Panc1 (cell line): ENCODE measurements at regions of chr11 and their contacts with region 1.

Region 1: GRCh38 chr11:75867775-75868374 is 52.9 kb downstream of the UVRAG start:
- DNase-seq: peak; percentile 27
- ATAC-seq: peak; percentile 82
- H3K4me3 ChIP-seq: no peak overlapping the region
- H3K27ac ChIP-seq: no peak overlapping the region
- H3K4me1 ChIP-seq: peaks cover 7% of the 10 kb centered on the region
- H3K27me3 ChIP-seq: no peaks in the 10 kb centered on the region
- CTCF ChIP-seq: peak; percentile 84

Region 2: DNA sequence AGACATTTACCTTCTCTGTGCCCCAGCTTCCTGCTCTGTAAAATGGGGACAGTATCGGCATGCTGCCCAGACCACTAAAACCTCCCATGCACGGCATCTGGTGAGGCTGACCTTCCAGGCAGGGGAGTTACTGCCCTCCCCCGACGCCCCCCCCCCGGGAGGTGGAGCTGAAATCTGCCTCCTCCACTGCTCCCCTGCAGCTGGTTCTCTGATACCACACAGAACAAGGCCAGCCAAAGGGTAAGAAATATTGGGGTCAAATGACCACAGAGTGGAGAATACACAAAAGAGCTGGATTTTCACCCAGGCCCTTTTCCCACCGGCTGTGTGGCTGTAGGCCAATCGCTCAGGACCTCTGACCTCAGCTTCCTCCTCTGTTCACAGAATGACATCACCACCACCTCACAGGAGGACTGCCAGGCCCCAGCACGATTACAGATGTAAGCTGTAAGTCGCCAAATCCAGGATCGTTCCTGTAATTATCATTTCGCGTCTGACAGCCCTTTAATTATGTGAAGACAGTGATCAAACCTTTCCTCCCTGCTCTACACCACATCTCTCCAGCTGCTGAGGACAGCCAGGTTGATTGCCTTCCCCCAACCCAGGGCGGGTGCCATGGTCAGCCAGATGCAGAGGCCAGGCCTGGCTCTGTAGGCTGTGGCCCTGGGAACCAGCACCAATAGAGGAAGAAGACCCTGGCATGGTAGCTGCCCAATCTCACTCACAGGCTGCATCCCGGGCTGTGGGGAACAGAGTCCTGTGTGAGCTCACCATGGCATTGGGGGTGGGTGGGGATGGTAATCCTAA is 399.1 kb before region 1 on chr11:
- CTCF ChIA-PET with region 1: no interaction called
- POLR2A ChIA-PET with region 1: interaction called, 12 read pairs
- in situ Hi-C with region 1: no loop called
- intact Hi-C with region 1: no loop called
- DNase-seq: no peak
- ATAC-seq: no peak
- H3K4me3 ChIP-seq: no peak overlapping the region
- H3K27ac ChIP-seq: no peak overlapping the region
- H3K4me1 ChIP-seq: no peaks in the 10 kb centered on the region
- H3K27me3 ChIP-seq: no peaks in the 10 kb centered on the region
- CTCF ChIP-seq: no peak

Region 3: GRCh38 chr11:75547580-75548058 is 320.3 kb before region 1 on chr11:
- CTCF ChIA-PET with region 1: no interaction called
- POLR2A ChIA-PET with region 1: no interaction called
- in situ Hi-C with region 1: no loop called
- intact Hi-C with region 1: loop called (anchors 5 kb)
- DNase-seq: no peak
- ATAC-seq: peak; percentile 91
- H3K4me3 ChIP-seq: no peak overlapping the region
- H3K27ac ChIP-seq: no peak overlapping the region
- H3K4me1 ChIP-seq: no peaks in the 10 kb centered on the region
- H3K27me3 ChIP-seq: no peaks in the 10 kb centered on the region
- CTCF ChIP-seq: peak; percentile 97

Region 4: DNA sequence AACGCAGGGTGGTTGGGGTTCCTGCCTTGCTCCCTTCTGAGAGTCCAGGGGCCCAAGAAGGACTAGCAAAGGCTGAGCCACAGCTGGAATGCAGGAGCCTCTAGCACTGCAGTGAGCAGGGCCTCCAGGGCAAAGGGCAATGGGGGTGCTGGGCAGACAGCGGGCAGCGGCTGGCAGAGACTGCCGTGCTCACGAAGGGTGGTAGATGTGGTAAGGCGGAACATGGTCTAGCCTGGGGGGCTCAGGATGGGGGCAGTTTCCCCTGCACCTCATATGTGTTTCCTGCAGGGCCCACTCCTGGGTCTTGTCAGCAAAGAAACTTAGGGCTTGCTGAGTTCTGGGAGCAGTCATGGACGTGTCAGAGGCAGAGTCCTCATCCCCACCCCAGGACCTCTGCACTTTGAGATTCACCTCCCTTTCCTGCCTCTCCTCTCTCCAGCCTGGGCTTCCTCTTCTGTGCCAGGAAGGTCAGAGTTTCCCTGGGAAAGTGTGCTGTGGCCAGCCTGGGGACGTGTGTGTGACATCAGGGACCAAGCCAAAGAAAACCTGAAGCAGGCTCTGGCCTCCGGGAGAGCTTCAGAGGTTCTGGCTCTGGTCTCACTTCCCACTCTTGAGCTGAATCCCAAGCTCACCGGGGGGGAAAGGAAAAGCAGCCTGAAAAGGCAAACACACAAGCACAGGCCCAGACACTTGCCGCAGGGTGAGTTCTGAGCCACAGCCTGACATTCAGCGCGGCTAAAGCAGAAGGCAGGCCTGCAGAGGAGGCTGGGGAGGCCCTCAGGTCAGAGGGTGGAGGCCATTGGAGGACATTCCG is 145.8 kb before region 1 on chr11:
- CTCF ChIA-PET with region 1: no interaction called
- POLR2A ChIA-PET with region 1: no interaction called
- in situ Hi-C with region 1: no loop called
- intact Hi-C with region 1: loop called (anchors 5 kb)
- DNase-seq: no peak
- ATAC-seq: no peak
- H3K4me3 ChIP-seq: no peak overlapping the region
- H3K27ac ChIP-seq: no peak overlapping the region
- H3K4me1 ChIP-seq: no peaks in the 10 kb centered on the region
- H3K27me3 ChIP-seq: no peaks in the 10 kb centered on the region
- CTCF ChIP-seq: no peak

Region 5: GRCh38 chr11:75802913-75803820 is 64.7 kb before region 1 on chr11:
- CTCF ChIA-PET with region 1: interaction called, 12 read pairs
- POLR2A ChIA-PET with region 1: no interaction called
- in situ Hi-C with region 1: no loop called
- intact Hi-C with region 1: loop called (anchors 1 kb)
- DNase-seq: peak; percentile 76
- ATAC-seq: peak; percentile 96
- H3K4me3 ChIP-seq: no peak overlapping the region
- H3K27ac ChIP-seq: no peak overlapping the region
- H3K4me1 ChIP-seq: no peaks in the 10 kb centered on the region
- H3K27me3 ChIP-seq: no peaks in the 10 kb centered on the region
- CTCF ChIP-seq: peak; percentile 97